Activated B cell treated with CpG ODN at 0.5 μM for 24 hours (primary cell): ENCODE measurements at regions of chr1 and their contacts with region 1.

Region 1: DNA sequence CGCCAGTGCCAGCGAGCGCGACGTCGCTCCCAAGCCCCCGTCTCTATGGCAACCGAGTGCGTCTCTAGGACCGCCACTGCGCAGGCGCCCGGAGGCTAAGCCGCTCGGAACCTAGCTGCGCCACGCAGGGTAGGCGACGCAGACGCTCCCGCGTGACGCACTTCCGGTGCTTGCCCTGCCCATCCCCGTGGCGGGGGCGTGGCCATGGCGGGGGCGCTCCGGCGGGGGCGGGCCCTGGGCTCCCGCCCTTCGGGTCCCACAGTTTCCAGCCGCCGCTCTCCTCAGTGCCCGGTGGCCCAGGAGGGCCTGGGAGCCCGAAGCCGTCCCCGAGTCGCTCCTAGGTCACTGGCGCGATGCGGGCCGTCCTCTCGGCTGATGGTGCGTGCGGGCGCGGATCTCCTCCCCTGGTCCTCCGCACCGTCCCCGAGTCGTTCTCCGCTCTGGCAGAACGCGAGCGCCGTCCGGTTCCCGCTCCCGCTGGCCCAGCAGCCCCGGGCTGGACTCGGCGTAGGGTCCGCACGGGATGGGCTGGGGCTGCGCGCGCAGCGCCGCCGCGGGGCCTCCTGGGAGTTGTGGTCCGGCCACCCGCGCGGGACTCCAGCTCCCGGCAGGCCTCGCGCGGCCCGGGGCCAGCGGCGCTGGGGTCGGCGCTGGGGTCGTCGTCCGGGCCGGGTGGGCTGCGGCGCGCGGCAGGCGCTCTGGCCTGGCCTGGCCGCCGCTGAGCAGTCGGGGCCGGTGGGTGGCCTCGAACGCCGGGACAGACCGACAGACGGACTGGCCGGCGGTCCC is at the start of gene MIB2:
- DNase-seq: peak; percentile 100
- ATAC-seq: peak; percentile 91
- H3K4me3 Mint-ChIP-seq: peak within 1 kb of the TSS; percentile 90
- H3K27ac Mint-ChIP-seq: peak within 1 kb of the TSS; percentile 86
- H3K4me1 Mint-ChIP-seq: peaks cover 26% of the 10 kb centered on the region
- H3K27me3 Mint-ChIP-seq: no peaks in the 10 kb centered on the region
- CTCF ChIP-seq: no peak
- total RNA-seq, gene MIB2: 27.6 and 36.4 TPM in 2 replicates

Region 2: GRCh38 chr1:1471389-1472052 is 143.9 kb before region 1 on chr1 and contains the start of gene ATAD3B:
- CTCF ChIA-PET with region 1: no interaction called
- POLR2A ChIA-PET with region 1: no interaction called
- intact Hi-C with region 1: loop called (anchors 1 kb)
- DNase-seq: peak; percentile 84
- ATAC-seq: peak; percentile 95
- H3K4me3 Mint-ChIP-seq: peak within 1 kb of the TSS; percentile 90
- H3K27ac Mint-ChIP-seq: peak within 1 kb of the TSS; percentile 82
- H3K4me1 Mint-ChIP-seq: peaks cover 25% of the 10 kb centered on the region
- H3K27me3 Mint-ChIP-seq: no peaks in the 10 kb centered on the region
- CTCF ChIP-seq: no peak
- total RNA-seq, gene ATAD3B: 47.4 and 49.5 TPM in 2 replicates

Region 3: DNA sequence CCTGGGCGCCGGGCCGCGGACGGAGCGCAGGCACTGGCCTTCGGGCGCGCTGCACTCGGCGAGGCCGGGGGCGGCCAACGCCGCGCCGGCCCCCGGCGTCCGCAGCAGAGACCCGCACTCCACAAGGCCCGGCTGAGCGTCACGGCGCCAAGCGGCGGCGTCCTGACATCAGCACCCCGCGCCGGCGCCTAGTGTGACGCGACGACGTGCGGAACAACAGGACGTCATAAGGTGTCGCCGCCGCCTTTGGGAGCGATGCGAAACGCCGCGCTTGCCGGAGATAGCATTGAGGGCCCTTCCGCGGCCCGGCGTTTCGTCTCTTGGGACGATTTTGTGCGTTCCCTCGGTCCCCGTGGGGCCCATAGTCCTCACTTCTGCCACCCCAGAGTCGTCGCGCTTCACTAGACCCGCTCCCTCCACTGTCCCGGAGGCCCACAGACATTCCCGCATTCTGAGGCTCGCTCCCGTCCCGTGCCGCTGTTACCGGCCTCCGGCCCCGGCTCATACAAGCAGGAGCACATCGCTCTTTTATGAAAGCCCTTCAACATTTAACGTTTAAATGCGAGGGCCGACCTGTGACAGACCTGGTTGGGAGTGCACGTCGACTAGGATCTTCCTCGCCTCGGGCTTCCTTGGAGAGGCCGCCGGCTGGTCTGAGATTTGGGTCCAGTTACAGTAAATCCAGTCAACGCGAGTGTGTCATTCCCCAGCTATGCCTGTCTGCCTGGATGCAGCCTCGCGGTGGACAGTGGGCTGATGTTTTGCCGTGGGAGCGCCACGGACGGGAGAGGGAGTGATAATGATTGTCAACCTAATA is 40.5 kb before region 1 on chr1 and contains the start of gene SSU72:
- CTCF ChIA-PET with region 1: no interaction called
- POLR2A ChIA-PET with region 1: interaction called, 5 read pairs
- intact Hi-C with region 1: loop called (anchors 1 kb)
- DNase-seq: peak; percentile 95
- ATAC-seq: peak; percentile 85
- H3K4me3 Mint-ChIP-seq: peak within 1 kb of the TSS; percentile 96
- H3K27ac Mint-ChIP-seq: peak within 1 kb of the TSS; percentile 98
- H3K4me1 Mint-ChIP-seq: peaks cover 37% of the 10 kb centered on the region
- H3K27me3 Mint-ChIP-seq: peaks cover 4% of the 10 kb centered on the region
- CTCF ChIP-seq: no peak
- total RNA-seq, gene SSU72: 111 and 118 TPM in 2 replicates

Region 4: DNA sequence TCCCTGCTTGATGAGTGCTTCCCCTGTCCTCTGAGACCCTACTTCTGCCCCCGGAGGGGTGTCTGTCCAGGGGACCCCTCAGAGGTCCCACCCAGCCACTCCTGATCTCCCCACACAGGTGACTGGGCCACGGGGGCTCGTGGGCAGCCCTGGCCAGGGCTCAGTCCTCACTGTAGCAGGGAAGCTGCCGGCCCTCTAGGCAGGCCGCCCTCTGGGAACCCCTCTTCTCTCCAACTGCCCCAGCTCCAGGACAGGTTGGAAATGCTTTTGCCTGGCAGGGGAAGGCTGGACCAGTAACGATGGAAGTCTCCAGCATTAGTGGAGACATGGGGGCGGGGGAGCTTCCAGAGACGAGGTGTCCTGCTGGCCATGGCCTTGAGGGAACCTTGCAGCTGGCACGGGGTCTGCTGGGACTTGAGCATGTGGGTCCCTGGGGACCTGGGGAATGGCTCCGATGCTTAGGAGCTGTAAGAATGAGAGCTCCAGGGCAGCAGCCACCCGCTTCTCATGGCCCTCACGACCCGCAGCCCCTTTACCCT is 12.4 kb before region 1 on chr1:
- CTCF ChIA-PET with region 1: no interaction called
- POLR2A ChIA-PET with region 1: interaction called, 19 read pairs
- intact Hi-C with region 1: no loop called
- DNase-seq: no peak
- ATAC-seq: no peak
- H3K4me3 Mint-ChIP-seq: no peak overlapping the region
- H3K27ac Mint-ChIP-seq: no peak overlapping the region
- H3K4me1 Mint-ChIP-seq: peaks cover 35% of the 10 kb centered on the region
- H3K27me3 Mint-ChIP-seq: peaks cover 6% of the 10 kb centered on the region
- CTCF ChIP-seq: no peak

Region 5: DNA sequence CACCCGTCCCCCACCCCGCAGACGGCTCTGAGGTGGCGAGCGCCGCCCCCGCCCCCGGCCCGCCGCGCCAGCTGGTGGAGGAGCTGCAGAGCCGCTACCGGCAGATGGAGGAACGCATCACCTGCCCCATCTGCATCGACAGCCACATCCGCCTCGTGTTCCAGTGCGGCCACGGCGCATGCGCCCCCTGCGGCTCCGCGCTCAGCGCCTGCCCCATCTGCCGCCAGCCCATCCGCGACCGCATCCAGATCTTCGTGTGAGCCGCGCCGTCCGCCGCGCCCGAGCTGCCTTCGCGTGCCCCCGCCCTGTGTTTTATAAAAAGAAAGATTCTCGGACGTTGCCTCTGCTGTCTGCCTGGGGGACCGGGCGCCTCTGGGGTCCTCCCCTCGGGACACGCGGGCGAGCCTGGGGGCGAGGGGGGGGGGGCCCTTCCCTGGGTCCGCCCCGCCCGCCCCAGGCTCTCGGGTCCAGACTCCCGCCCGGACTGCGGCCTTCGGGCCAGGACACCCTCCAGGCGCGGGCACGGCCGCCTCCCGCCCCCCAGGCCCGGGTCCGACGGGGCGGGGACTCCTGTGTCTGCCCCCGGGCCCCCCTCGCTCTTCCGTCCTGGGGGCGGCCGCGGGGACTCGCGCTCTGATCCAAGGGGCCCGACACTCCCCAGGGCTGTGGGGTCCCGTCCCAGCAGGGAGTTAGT is 15.0 kb after region 1 on chr1:
- CTCF ChIA-PET with region 1: no interaction called
- POLR2A ChIA-PET with region 1: interaction called, 35 read pairs
- intact Hi-C with region 1: loop called (anchors 2 kb)
- DNase-seq: peak; percentile 90
- ATAC-seq: peak; percentile 80
- H3K4me3 Mint-ChIP-seq: peak overlapping the region; percentile 82
- H3K27ac Mint-ChIP-seq: peak overlapping the region; percentile 82
- H3K4me1 Mint-ChIP-seq: peaks cover 6% of the 10 kb centered on the region
- H3K27me3 Mint-ChIP-seq: peaks cover 4% of the 10 kb centered on the region
- CTCF ChIP-seq: no peak

Region 6: DNA sequence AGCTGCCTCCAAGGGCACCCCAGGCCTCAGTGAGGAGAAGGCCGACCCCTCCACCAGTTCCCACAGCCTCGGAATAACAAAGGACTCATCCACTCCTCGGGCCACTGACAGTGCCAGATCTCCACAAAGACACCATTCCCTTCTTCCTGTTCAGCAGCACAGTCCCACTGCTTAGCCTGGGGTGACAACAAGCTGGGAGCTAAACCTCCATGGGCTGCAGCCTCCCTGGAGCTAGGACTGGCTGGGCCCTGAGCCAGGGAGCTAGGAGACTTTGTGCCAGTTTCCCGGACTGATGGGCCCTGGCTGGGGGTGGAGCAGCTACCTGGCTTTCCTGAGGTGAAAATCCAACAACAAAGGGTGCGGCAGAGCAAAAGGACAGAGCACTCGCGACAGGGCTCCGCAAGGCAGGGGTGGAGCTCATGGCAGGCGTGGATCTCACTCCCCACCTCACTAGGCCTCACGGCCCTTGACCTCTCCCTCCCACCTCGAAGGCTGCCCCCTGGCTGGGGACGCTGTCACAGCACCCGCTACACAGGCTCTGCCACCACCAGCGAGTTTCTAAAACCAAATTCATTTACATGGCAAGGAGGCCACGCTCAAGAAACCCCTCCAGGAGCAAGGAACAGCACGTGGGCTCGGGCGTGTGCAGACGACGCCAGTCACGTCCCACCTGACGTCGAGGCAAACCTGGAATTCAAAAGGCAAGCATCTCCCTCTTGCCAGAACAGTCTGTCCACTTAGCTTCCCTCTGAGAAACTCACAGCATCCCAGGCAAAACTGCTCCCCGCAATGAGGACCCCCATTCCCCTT is 63.3 kb after region 1 on chr1:
- CTCF ChIA-PET with region 1: no interaction called
- POLR2A ChIA-PET with region 1: interaction called, 5 read pairs
- intact Hi-C with region 1: loop called (anchors 5 kb)
- DNase-seq: peak; percentile 34
- ATAC-seq: peak; percentile 38
- H3K4me3 Mint-ChIP-seq: peak overlapping the region; percentile 78
- H3K27ac Mint-ChIP-seq: peak overlapping the region; percentile 93
- H3K4me1 Mint-ChIP-seq: peaks cover 26% of the 10 kb centered on the region
- H3K27me3 Mint-ChIP-seq: no peaks in the 10 kb centered on the region
- CTCF ChIP-seq: no peak

Region 7: DNA sequence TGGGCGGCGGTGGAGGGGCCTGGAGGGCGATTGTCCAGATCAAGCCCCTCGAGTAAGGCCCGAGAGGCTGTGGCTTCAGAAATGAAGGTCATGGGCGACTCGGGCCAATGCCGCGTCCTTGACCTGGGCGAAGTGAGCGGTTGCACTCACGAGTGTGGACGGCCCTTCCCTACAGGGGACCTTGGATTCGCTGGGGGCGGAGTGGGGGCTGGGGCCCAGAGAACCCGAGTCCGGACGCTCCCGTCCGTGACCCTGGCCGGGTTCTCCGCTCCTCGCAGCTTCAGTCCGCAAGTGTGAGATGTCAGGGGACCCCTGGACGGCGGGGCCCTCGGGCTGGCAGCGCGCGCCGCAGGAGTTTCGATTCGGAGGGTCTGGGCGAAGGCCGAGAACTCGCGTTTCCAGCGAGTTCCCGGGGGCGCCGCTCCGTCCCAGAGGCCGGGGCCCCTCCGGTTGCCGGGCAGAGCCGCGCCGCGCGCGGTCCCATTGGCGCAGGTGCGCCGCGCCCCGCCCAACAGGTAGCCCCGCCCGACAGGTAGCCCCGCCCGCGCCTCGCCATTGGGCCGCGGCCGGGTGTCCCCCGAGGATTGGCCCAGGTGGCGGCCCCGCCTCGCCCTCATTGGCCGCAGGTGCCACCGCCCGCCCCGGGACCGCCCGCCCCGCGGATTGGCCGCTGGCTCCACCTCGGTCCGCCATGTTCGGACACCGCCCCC is 434.4 kb after region 1 on chr1 and contains the start of gene PRKCZ:
- CTCF ChIA-PET with region 1: no interaction called
- POLR2A ChIA-PET with region 1: no interaction called
- intact Hi-C with region 1: loop called (anchors 1 kb)
- DNase-seq: peak; percentile 95
- ATAC-seq: peak; percentile 96
- H3K4me3 Mint-ChIP-seq: peak within 1 kb of the TSS; percentile 81
- H3K27ac Mint-ChIP-seq: peak within 1 kb of the TSS; percentile 68
- H3K4me1 Mint-ChIP-seq: peaks cover 31% of the 10 kb centered on the region
- H3K27me3 Mint-ChIP-seq: peaks cover 8% of the 10 kb centered on the region
- CTCF ChIP-seq: no peak
- total RNA-seq, gene PRKCZ: 20.5 and 28.5 TPM in 2 replicates